ENCODE measurements at regions of chr4 and their contacts with region 1.

Region 1: GRCh38 chr4:10530137-10530786 is 73.0 kb upstream of the ZNF518B start:
- DNase-seq: peak; percentile 20
- H3K4me3 ChIP-seq: no peak overlapping the region
- H3K27ac ChIP-seq: no peak overlapping the region
- H3K27me3 ChIP-seq: no peaks in the 10 kb centered on the region
- CTCF ChIP-seq: no peak

Region 2: GRCh38 chr4:9867751-9868425 is 662.4 kb before region 1 on chr4:
- in situ Hi-C with region 1: no loop called
- DNase-seq: no peak
- H3K4me3 ChIP-seq: no peak overlapping the region
- H3K27ac ChIP-seq: no peak overlapping the region
- H3K27me3 ChIP-seq: no peaks in the 10 kb centered on the region
- CTCF ChIP-seq: no peak

Region 3: GRCh38 chr4:10157478-10158332 is 372.6 kb before region 1 on chr4:
- in situ Hi-C with region 1: loop called (anchors 25 kb)
- DNase-seq: peak; percentile 73
- H3K4me3 ChIP-seq: no peak overlapping the region
- H3K27ac ChIP-seq: no peak overlapping the region
- H3K27me3 ChIP-seq: peaks cover 3% of the 10 kb centered on the region
- CTCF ChIP-seq: peak; percentile 90

Measured in brain microvascular endothelial cell (primary cell).